ENCODE measurements at regions of chr7 and their contacts with region 1.

Region 1: GRCh38 chr7:104848138-104848990 is 165.6 kb upstream of the KMT2E start:
- DNase-seq: peak; percentile 61
- ATAC-seq: no peak
- H3K4me3 Mint-ChIP-seq: no peak overlapping the region
- H3K27ac Mint-ChIP-seq: no peak overlapping the region
- H3K4me1 Mint-ChIP-seq: no peaks in the 10 kb centered on the region
- H3K27me3 Mint-ChIP-seq: peaks cover 13% of the 10 kb centered on the region

Region 2: DNA sequence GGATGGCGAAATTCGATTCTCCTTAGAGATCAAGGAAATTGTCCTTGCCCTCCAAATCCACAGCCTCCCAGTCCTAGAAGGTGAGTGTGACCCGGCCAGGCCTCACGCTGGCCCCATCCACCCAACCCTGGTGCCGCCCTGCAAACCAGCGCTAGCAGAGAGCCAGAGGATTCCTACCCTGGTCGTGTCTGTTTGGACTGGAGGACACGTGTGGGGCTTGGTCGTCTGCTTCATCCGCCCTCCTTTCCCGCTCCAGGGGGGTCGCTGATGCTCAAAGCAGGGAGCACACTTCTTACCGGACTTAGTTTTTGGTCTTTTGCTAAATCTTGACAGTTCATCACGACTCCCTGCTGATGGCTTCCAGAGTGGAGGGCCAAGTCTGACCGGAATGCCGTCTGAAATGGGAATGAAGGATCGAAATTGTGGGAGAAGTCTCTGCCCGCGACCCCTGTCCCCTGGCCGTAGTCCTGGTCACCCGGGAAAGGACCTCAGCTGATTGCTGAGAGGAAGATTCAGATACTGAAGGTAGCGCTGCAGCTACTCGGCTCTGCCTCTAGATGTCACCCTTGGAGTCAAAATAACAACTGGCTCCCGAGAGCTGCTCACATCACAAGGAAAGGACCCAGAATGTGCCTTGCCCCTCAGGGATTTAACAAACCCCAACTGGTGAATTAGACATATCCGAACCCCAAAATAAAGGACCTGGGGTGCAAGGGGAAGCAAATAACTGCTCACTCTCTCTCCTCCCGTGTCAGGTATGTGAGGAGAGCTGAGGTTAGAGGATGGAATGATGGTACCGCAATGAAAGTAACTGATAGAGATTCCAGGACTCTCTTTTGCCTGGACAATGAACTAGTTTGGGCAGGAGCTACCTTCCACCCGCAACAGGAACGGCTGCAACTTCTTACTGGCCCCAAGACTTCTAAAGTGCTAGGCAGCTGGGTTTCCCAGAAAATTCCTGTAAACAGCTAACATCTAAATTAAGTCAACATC is 617.0 kb before region 1 on chr7:
- CTCF ChIA-PET with region 1: interaction called, 20 read pairs
- POLR2A ChIA-PET with region 1: no interaction called
- DNase-seq: peak; percentile 62
- ATAC-seq: peak; percentile 82
- H3K4me3 Mint-ChIP-seq: no peak overlapping the region
- H3K27ac Mint-ChIP-seq: no peak overlapping the region
- H3K4me1 Mint-ChIP-seq: no peaks in the 10 kb centered on the region
- H3K27me3 Mint-ChIP-seq: peaks cover 20% of the 10 kb centered on the region

Region 3: DNA sequence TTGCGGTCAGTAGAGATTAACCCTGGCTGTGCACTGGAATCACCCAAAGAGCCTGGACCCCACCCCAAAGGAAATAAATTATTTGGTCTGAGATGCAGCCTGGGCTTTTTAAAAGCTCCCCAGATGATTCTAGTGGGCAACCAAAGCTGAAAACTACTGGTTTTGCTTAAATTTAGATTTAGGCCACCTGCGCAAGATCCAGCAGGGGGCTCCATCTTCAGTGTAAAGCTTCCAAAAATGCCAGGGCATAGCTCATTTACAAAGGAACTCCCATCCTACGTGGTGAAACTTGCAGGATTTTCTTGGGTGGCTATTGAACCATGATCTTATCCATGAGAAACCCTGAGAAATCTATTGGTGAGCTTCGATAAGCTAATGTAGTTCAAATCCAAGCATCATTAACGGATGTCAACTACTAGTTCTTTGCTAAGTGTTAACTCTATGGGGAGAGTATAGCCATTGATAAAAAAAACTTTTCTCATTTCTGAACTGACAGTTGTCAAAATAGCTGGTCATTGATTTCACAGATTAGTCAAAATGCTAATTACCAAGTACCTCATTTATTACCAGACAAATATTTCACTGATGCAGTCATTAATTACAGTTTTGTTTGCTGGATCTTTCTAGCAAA is 204.7 kb before region 1 on chr7:
- CTCF ChIA-PET with region 1: interaction called, 13 read pairs
- POLR2A ChIA-PET with region 1: no interaction called
- DNase-seq: no peak
- ATAC-seq: no peak
- H3K4me3 Mint-ChIP-seq: no peak overlapping the region
- H3K27ac Mint-ChIP-seq: no peak overlapping the region
- H3K4me1 Mint-ChIP-seq: no peaks in the 10 kb centered on the region
- H3K27me3 Mint-ChIP-seq: no peaks in the 10 kb centered on the region

Region 4: DNA sequence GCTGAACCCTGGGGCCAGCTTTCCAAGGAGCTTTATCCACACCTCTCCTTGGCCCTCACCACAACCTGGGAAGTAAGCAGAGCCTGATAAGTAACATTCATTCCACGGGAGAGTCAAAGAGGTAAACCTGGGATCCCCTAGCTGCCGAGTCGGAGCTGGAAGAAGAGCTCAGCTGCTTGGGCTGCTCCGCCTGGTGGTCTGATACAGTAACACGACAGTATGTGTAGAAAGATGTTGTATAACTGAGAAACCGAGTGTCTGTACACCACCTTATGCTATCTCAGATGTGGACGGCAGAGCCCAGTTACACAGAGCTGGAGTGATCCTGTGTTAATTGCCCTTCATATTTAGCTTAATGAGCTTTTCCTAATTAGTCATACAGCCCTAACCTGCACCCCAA is 14.4 kb after region 1 on chr7:
- CTCF ChIA-PET with region 1: interaction called, 23 read pairs
- POLR2A ChIA-PET with region 1: no interaction called
- DNase-seq: no peak
- ATAC-seq: no peak
- H3K4me3 Mint-ChIP-seq: no peak overlapping the region
- H3K27ac Mint-ChIP-seq: no peak overlapping the region
- H3K4me1 Mint-ChIP-seq: peaks cover 10% of the 10 kb centered on the region
- H3K27me3 Mint-ChIP-seq: peaks cover 10% of the 10 kb centered on the region